Ascending aorta (tissue), 2 donors: ENCODE measurements at regions of chr4 and their contacts with region 1.

Region 1: DNA sequence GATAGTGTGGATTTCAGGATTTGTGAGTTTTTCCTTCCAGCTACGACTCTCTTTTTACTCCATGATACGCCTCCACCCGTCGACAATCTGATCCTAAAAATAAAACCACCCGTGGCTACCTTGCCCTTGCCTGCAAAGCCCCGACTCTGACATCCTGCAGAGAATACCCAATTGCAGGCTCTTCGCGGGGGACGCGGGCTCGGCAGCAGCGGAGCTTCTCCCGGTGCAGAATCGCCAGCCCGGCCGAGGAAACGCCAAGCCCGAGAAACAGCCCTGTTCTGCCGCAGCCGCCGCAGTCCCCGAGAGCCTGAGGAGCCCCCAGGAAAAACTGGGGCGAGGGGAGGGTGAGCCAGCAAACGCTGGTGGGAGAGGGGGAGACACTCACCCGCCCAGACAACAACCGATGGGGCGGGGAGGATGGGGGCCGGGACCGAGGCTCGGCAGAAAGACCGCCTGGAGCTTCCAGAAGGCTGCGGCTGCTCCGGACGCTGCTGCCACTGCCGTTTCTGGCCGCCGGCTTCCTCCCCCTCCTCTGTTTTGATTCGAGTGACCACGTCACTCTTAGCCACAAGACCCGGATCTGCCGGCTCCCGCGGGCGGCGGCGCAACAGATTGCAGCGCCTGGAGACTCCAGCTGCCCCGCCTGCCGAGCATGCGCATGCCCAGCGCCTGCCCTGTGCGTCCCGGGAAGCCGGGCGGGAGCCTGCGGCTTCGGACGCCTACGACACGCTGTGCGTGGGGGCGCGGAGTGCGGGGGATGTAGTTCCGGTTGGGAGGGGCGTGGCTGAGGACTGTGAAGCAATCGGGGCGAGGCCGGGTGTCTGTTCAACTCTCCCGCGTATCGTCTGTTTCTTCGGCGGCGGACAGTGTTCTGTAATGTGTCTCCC is at the start of gene SMIM14:
- DNase-seq: peak; percentile 96 to 99
- H3K4me3 ChIP-seq: peak within 1 kb of the TSS; percentile 70 to 86
- H3K27ac ChIP-seq: peak within 1 kb of the TSS; percentile 96
- H3K4me1 ChIP-seq: peaks cover 0 to 12% of the 10 kb centered on the region in 2 donors
- H3K27me3 ChIP-seq: no peaks in the 10 kb centered on the region
- CTCF ChIP-seq: peak in 1 of 3 experiments; percentile 32
- total RNA-seq, gene SMIM14: 48.2 TPM

Region 2: GRCh38 chr4:39044364-39044955 is 594.1 kb before region 1 on chr4:
- intact Hi-C with region 1: loop called (anchors 10 kb)
- DNase-seq: peak; percentile 81 to 95
- H3K4me3 ChIP-seq: peak overlapping the region; percentile 85 to 93
- H3K27ac ChIP-seq: peak overlapping the region; percentile 77 to 87
- H3K4me1 ChIP-seq: no peaks in the 10 kb centered on the region
- H3K27me3 ChIP-seq: no peaks in the 10 kb centered on the region
- CTCF ChIP-seq: no peak

Region 3: DNA sequence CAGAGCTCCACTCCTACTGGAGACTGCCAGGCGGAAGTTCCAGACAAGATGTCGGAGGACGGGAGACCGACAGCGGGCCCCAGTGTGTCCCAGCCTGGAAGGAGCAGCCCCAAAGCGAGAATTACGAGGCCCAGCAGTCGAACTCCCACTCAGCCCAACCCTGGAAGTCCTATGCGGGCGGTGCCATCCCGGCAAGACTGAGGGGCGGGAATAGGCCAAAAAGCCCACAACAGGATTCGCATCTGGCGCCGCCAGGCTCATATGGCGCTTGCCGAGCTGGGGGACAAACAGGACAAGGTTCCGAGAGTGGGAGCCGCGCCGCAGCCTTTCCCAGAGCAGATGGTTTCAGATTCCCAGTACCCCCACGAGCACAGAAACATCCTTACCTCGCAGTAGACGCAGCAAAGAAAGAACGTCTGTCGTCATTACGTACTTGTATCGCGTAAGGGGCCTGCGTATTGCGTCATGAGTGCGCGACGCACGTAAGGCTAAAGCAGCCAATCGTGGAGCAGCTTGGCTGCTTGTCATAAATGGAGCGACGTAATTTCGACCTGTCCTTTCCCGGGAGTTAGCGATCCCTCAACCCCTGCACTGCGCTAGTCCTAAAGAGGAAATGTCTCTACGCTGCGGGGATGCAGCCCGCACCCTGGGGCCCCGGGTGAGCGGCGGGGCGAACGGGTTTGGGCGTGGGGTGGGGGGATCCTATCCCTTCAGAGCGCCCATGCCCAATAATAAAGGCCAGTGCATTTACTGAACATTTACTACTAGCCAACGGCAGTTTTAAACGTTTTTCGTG is 179.9 kb before region 1 on chr4 and contains the starts of genes LIAS and RPL9:
- intact Hi-C with region 1: loop called (anchors 2 kb)
- DNase-seq: peak; percentile 90 to 98
- H3K4me3 ChIP-seq: peak within 1 kb of the TSS; percentile 82 to 96
- H3K27ac ChIP-seq: peak within 1 kb of the TSS; percentile 96 to 98
- H3K4me1 ChIP-seq: peaks cover 2 to 16% of the 10 kb centered on the region in 2 donors
- H3K27me3 ChIP-seq: no peaks in the 10 kb centered on the region
- CTCF ChIP-seq: peak in 1 of 3 experiments; percentile 24
- total RNA-seq, gene LIAS: 2.9 TPM
- total RNA-seq, gene RPL9: 1,701 TPM

Region 4: DNA sequence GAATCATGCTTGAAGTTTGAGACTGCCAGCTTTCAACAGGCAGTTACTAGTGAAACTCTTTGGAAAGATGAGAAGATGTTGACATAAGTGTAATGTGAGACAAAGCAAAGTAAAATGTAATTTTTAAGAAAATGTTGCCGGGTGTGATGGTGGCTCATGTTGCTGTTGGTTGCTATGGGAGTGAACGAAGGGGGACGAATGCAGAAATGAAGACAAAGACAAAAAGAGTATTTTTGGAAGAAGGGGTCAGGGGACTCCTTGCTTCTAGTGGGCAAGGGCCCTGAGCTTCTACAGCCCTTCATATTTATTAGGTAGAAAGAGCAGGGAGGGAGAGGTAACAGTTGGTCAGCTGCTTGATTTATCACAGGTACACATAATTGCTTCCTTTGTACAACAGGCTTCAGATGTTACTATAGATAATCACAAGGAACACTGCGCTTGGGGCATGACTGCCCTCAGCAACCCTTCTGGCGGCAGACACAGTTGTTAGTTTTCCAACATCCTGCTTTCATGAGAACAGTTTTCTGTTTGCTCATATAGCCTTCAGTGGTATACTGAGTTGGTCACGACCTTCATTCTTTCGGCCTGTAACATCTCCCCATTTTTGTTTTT is 99.4 kb before region 1 on chr4:
- intact Hi-C with region 1: no loop called
- DNase-seq: no peak
- H3K4me3 ChIP-seq: no peak overlapping the region
- H3K27ac ChIP-seq: no peak overlapping the region
- H3K4me1 ChIP-seq: no peaks in the 10 kb centered on the region
- H3K27me3 ChIP-seq: no peaks in the 10 kb centered on the region
- CTCF ChIP-seq: no peak

Region 5: GRCh38 chr4:39613073-39613656 is 25.4 kb before region 1 on chr4:
- intact Hi-C with region 1: loop called (anchors 1 kb)
- DNase-seq: no peak
- H3K4me3 ChIP-seq: peak overlapping the region in 1 of 2 donors; percentile 35
- H3K27ac ChIP-seq: peak overlapping the region; percentile 78 to 86
- H3K4me1 ChIP-seq: peaks cover 2 to 41% of the 10 kb centered on the region in 2 donors
- H3K27me3 ChIP-seq: no peaks in the 10 kb centered on the region
- CTCF ChIP-seq: no peak

Region 6: GRCh38 chr4:39621582-39621981 is 17.0 kb before region 1 on chr4:
- intact Hi-C with region 1: loop called (anchors 1 kb)
- DNase-seq: peak in 1 of 2 donors; percentile 83
- H3K4me3 ChIP-seq: peak overlapping the region in 1 of 2 donors; percentile 12
- H3K27ac ChIP-seq: peak overlapping the region; percentile 66 to 81
- H3K4me1 ChIP-seq: peaks cover 0 to 32% of the 10 kb centered on the region in 2 donors
- H3K27me3 ChIP-seq: no peaks in the 10 kb centered on the region
- CTCF ChIP-seq: no peak

Region 7: GRCh38 chr4:39657465-39657864 is 18.9 kb after region 1 on chr4:
- intact Hi-C with region 1: no loop called
- DNase-seq: no peak
- H3K4me3 ChIP-seq: no peak overlapping the region
- H3K27ac ChIP-seq: no peak overlapping the region
- H3K4me1 ChIP-seq: no peaks in the 10 kb centered on the region
- H3K27me3 ChIP-seq: no peaks in the 10 kb centered on the region
- CTCF ChIP-seq: no peak

Region 8: GRCh38 chr4:39977489-39978377 is 339.1 kb after region 1 on chr4 and contains the start of gene PDS5A:
- intact Hi-C with region 1: loop called (anchors 5 kb)
- DNase-seq: peak; percentile 44 to 93
- H3K4me3 ChIP-seq: peak within 1 kb of the TSS; percentile 98 to 99
- H3K27ac ChIP-seq: peak within 1 kb of the TSS; percentile 94 to 95
- H3K4me1 ChIP-seq: peaks cover 0 to 18% of the 10 kb centered on the region in 2 donors
- H3K27me3 ChIP-seq: no peaks in the 10 kb centered on the region
- CTCF ChIP-seq: peak; percentile 71 to 94 (median 83)
- total RNA-seq, gene PDS5A: 52.9 TPM

Region 9: GRCh38 chr4:40056716-40057585 is 418.4 kb after region 1 on chr4 and contains the start of gene N4BP2:
- intact Hi-C with region 1: loop called (anchors 1 kb)
- DNase-seq: peak; percentile 21 to 88
- H3K4me3 ChIP-seq: peak within 1 kb of the TSS; percentile 72 to 98
- H3K27ac ChIP-seq: peak within 1 kb of the TSS; percentile 97 to 100
- H3K4me1 ChIP-seq: peaks cover 0 to 11% of the 10 kb centered on the region in 2 donors
- H3K27me3 ChIP-seq: no peaks in the 10 kb centered on the region
- CTCF ChIP-seq: peak; percentile 47 to 77 (median 74)
- total RNA-seq, gene N4BP2: 0.53 TPM